MCF 10A (cell line): ENCODE measurements at regions of chr7 and their contacts with region 1.

Region 1: DNA sequence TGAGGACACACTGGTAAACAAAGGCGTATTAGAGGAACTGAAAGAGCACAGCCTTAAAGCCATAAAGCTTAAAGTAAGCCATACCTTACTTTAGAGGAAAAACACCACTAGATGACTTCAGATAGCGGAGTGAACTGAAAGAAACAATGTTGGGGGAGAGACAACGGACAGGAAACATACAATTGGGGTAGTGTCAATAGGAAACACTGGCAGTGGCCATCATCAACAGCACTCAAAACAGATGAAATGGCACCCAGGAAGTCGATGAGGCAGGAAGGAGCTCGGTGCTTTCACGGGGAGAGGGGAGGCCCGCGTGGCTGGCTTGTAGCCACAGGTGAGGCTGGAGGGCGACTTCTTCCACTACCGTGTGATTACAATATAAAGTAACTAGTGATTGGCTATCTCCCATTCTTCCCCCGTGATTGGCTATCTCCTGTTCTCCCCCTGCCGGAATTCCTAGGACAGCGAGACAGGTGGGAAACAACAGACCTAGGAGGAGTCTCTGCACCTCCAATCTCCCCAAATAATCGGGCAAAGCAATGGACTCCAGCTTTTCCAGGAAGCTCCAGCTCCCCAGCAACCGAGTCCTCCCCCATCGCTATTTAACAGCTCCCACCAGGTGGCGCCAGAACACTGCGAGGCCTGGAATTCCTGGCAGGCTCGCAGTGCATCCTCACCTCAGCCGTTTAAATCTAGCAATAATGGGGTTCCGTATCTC is 2.4 kb upstream of the TAS2R38 start:
- DNase-seq: peak; percentile 85
- H3K4me3 Mint-ChIP-seq: peak overlapping the region; percentile 60
- H3K27ac Mint-ChIP-seq: peak overlapping the region; percentile 9
- H3K4me1 Mint-ChIP-seq: no peaks in the 10 kb centered on the region
- H3K27me3 Mint-ChIP-seq: no peaks in the 10 kb centered on the region
- CTCF ChIP-seq: peak; percentile 92

Region 2: DNA sequence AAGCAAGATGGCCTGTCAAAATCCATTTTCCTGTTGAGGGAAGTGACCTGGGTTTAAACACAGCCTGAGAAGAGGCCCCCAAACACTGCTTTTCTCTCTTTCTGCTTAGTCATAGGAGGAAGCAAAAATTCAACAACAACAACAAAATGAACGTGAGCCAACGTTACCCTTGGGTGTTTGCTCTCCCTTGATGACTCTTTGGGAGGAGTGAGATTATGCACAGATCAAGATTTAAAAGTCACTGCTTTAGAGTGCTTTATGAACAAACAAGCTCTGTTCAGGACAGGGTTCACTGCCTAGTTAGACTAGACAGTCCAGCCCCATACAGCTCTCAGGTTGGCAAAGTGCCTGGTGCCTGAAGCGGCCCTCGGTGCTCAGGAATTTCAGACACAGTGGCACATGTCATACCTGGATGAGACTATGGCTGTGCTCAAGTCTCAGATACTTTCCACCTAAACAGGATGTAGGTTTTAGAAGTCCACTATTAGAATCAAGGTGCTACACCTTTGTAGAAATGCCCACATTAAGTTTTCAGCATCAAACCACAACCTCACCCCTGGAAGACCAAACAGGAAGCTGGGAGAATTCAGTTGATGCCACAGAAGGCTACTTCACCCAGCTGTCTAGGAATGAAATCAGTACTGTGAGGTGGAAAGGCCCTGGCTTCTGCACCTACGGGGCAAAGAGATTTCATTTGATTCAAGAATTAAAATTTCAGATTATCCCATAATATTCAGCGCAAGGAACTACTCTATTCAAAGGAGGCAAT is 312.7 kb before region 1 on chr7:
- CTCF ChIA-PET with region 1: no interaction called
- POLR2A ChIA-PET with region 1: no interaction called
- intact Hi-C with region 1: no loop called
- DNase-seq: peak; percentile 20
- H3K4me3 Mint-ChIP-seq: no peak overlapping the region
- H3K27ac Mint-ChIP-seq: no peak overlapping the region
- H3K4me1 Mint-ChIP-seq: no peaks in the 10 kb centered on the region
- H3K27me3 Mint-ChIP-seq: no peaks in the 10 kb centered on the region
- CTCF ChIP-seq: no peak

Region 3: DNA sequence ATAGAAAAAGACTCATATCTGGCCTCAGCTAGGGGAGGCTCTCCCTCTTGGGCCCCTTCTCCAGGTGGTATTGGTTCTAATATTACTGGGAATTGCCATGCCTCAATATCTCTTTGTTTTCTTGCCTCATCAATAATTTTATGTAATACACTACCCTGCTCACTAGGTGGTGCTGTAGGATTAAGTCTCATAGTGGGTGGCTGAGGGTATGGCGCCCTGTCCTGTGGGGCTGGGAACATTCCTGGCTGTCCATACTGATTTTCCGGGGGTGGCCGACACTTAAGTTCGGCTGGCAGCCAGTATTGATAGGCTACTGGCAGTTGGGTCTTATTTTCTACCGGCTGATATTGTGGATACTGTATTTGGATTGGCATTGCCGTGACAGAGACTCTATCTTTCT is 221.0 kb before region 1 on chr7:
- CTCF ChIA-PET with region 1: interaction called, 3 read pairs
- POLR2A ChIA-PET with region 1: no interaction called
- intact Hi-C with region 1: loop called (anchors 5 kb)
- DNase-seq: peak; percentile 53
- H3K4me3 Mint-ChIP-seq: no peak overlapping the region
- H3K27ac Mint-ChIP-seq: no peak overlapping the region
- H3K4me1 Mint-ChIP-seq: no peaks in the 10 kb centered on the region
- H3K27me3 Mint-ChIP-seq: no peaks in the 10 kb centered on the region
- CTCF ChIP-seq: peak; percentile 39

Region 4: GRCh38 chr7:141992156-141992555 is 16.2 kb after region 1 on chr7:
- CTCF ChIA-PET with region 1: interaction called, 22 read pairs
- POLR2A ChIA-PET with region 1: no interaction called
- intact Hi-C with region 1: no loop called
- DNase-seq: no peak
- H3K4me3 Mint-ChIP-seq: no peak overlapping the region
- H3K27ac Mint-ChIP-seq: no peak overlapping the region
- H3K4me1 Mint-ChIP-seq: no peaks in the 10 kb centered on the region
- H3K27me3 Mint-ChIP-seq: no peaks in the 10 kb centered on the region
- CTCF ChIP-seq: no peak

Region 5: GRCh38 chr7:142012825-142013511 is 37.0 kb after region 1 on chr7:
- CTCF ChIA-PET with region 1: interaction called, 68 read pairs
- POLR2A ChIA-PET with region 1: no interaction called
- intact Hi-C with region 1: loop called (anchors 1 kb)
- DNase-seq: peak; percentile 45
- H3K4me3 Mint-ChIP-seq: no peak overlapping the region
- H3K27ac Mint-ChIP-seq: no peak overlapping the region
- H3K4me1 Mint-ChIP-seq: peaks cover 9% of the 10 kb centered on the region
- H3K27me3 Mint-ChIP-seq: no peaks in the 10 kb centered on the region
- CTCF ChIP-seq: no peak

Region 6: GRCh38 chr7:142039231-142039630 is 63.3 kb after region 1 on chr7:
- CTCF ChIA-PET with region 1: interaction called, 108 read pairs
- POLR2A ChIA-PET with region 1: no interaction called
- intact Hi-C with region 1: no loop called
- DNase-seq: no peak
- H3K4me3 Mint-ChIP-seq: no peak overlapping the region
- H3K27ac Mint-ChIP-seq: no peak overlapping the region
- H3K4me1 Mint-ChIP-seq: no peaks in the 10 kb centered on the region
- H3K27me3 Mint-ChIP-seq: no peaks in the 10 kb centered on the region
- CTCF ChIP-seq: no peak

Region 7: GRCh38 chr7:142188846-142189245 is 212.9 kb after region 1 on chr7:
- CTCF ChIA-PET with region 1: interaction called, 86 read pairs
- POLR2A ChIA-PET with region 1: no interaction called
- intact Hi-C with region 1: loop called (anchors 1 kb)
- DNase-seq: peak; percentile 27
- H3K4me3 Mint-ChIP-seq: no peak overlapping the region
- H3K27ac Mint-ChIP-seq: no peak overlapping the region
- H3K4me1 Mint-ChIP-seq: no peaks in the 10 kb centered on the region
- H3K27me3 Mint-ChIP-seq: peaks cover 26% of the 10 kb centered on the region
- CTCF ChIP-seq: peak; percentile 38

Region 8: DNA sequence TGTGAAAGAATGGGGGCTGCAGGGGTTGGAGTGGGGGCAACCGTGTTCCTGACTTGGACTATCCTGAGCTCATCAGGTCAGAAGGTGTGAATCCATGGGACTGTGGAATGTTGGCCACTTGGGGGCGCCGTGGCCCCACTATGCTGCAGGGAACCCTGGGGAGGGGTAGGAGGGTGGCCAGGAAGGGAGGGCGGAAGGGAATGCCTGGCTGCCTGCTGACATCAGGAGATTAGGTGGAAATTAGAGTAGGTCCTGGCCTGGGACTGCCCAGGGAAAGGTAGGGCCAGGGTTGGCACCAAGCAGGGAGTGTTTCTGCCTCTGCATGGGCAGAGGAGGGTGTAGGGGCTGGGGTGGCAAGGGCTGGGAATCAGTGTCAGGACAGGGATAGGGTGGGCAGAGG is 347.7 kb after region 1 on chr7:
- CTCF ChIA-PET with region 1: interaction called, 3 read pairs
- POLR2A ChIA-PET with region 1: no interaction called
- intact Hi-C with region 1: loop called (anchors 5 kb)
- DNase-seq: peak; percentile 57
- H3K4me3 Mint-ChIP-seq: no peak overlapping the region
- H3K27ac Mint-ChIP-seq: no peak overlapping the region
- H3K4me1 Mint-ChIP-seq: peaks cover 6% of the 10 kb centered on the region
- H3K27me3 Mint-ChIP-seq: peaks cover 39% of the 10 kb centered on the region
- CTCF ChIP-seq: peak; percentile 47